Activated CD4-positive, alpha-beta T cell treated with anti-CD3 and anti-CD28 coated beads for 36 hours (primary cell): ENCODE measurements at regions of chr3 and their contacts with region 1.

Region 1: GRCh38 chr3:111668912-111669488 is 73.9 kb upstream of the ZBED2 start:
- DNase-seq: no peak
- ATAC-seq: peak; percentile 39
- H3K4me3 Mint-ChIP-seq: peak overlapping the region; percentile 26
- H3K27ac Mint-ChIP-seq: peak overlapping the region; percentile 75
- H3K4me1 Mint-ChIP-seq: peaks cover 79% of the 10 kb centered on the region
- H3K27me3 Mint-ChIP-seq: no peaks in the 10 kb centered on the region

Region 2: GRCh38 chr3:111610189-111610588 is 58.8 kb before region 1 on chr3:
- CTCF ChIA-PET with region 1: interaction called, 10 read pairs
- POLR2A ChIA-PET with region 1: no interaction called
- intact Hi-C with region 1: loop called (anchors 2 kb)
- DNase-seq: peak; percentile 53
- ATAC-seq: peak; percentile 56
- H3K4me3 Mint-ChIP-seq: peak overlapping the region; percentile 62
- H3K27ac Mint-ChIP-seq: peak overlapping the region; percentile 98
- H3K4me1 Mint-ChIP-seq: peaks cover 98% of the 10 kb centered on the region
- H3K27me3 Mint-ChIP-seq: no peaks in the 10 kb centered on the region

Region 3: DNA sequence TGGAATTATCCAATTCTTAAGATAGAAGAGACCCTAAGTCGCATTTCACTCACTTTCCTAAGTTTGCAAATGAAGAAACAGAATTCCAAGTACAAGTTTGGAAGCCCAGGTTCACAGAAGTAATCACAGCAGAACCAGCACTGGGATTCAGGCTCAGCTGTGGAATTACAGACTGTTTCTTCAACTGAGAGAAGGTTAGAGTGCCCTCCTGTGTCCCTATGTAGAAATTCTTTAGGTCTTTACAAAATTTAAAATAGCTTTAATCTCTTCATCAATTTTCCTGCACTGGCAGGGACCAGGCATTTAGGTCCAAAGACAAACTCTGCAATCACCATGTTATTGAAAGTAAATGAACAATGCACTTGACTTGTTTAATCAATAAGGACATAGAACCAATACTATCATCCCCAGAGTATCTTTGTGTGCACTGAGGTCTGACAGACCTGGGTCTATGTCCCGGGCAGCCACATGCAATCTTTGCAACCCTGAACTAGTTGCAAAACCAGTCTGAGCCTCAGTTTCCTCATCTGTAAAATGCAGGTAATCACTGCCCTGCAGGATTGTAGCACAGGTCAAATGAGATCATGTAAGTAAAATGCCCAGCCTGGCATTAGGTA is 22.4 kb after region 1 on chr3:
- CTCF ChIA-PET with region 1: interaction called, 26 read pairs
- POLR2A ChIA-PET with region 1: interaction called, 3 read pairs
- intact Hi-C with region 1: loop called in 1 of 2 experiments (anchors 1 kb)
- DNase-seq: no peak
- ATAC-seq: no peak
- H3K4me3 Mint-ChIP-seq: no peak overlapping the region
- H3K27ac Mint-ChIP-seq: no peak overlapping the region
- H3K4me1 Mint-ChIP-seq: peaks cover 46% of the 10 kb centered on the region
- H3K27me3 Mint-ChIP-seq: no peaks in the 10 kb centered on the region

Region 4: GRCh38 chr3:111758642-111759041 is 89.6 kb after region 1 on chr3:
- CTCF ChIA-PET with region 1: interaction called, 5 read pairs
- POLR2A ChIA-PET with region 1: no interaction called
- intact Hi-C with region 1: loop called in 1 of 2 experiments (anchors 1 kb)
- DNase-seq: peak; percentile 46
- ATAC-seq: no peak
- H3K4me3 Mint-ChIP-seq: no peak overlapping the region
- H3K27ac Mint-ChIP-seq: no peak overlapping the region
- H3K4me1 Mint-ChIP-seq: peaks cover 22% of the 10 kb centered on the region
- H3K27me3 Mint-ChIP-seq: no peaks in the 10 kb centered on the region

Region 5: GRCh38 chr3:111978493-111979433 is 309.8 kb after region 1 on chr3 and contains the start of gene ABHD10:
- CTCF ChIA-PET with region 1: interaction called, 10 read pairs
- POLR2A ChIA-PET with region 1: interaction called, 4 read pairs
- intact Hi-C with region 1: no loop called
- DNase-seq: peak; percentile 98
- ATAC-seq: peak; percentile 97
- H3K4me3 Mint-ChIP-seq: peak within 1 kb of the TSS; percentile 87
- H3K27ac Mint-ChIP-seq: peak within 1 kb of the TSS; percentile 93
- H3K4me1 Mint-ChIP-seq: peaks cover 40% of the 10 kb centered on the region
- H3K27me3 Mint-ChIP-seq: no peaks in the 10 kb centered on the region
- total RNA-seq, gene ABHD10: 58.7 to 64.1 TPM